Activated naive CD8-positive, alpha-beta T cell treated with anti-CD3 and anti-CD28 coated beads, Interleukin-2, amount 10 ng/mL, durations not matched to agents 7 days and 5 days (primary cell): ENCODE measurements at regions of chrX and their contacts with region 1.

Region 1: DNA sequence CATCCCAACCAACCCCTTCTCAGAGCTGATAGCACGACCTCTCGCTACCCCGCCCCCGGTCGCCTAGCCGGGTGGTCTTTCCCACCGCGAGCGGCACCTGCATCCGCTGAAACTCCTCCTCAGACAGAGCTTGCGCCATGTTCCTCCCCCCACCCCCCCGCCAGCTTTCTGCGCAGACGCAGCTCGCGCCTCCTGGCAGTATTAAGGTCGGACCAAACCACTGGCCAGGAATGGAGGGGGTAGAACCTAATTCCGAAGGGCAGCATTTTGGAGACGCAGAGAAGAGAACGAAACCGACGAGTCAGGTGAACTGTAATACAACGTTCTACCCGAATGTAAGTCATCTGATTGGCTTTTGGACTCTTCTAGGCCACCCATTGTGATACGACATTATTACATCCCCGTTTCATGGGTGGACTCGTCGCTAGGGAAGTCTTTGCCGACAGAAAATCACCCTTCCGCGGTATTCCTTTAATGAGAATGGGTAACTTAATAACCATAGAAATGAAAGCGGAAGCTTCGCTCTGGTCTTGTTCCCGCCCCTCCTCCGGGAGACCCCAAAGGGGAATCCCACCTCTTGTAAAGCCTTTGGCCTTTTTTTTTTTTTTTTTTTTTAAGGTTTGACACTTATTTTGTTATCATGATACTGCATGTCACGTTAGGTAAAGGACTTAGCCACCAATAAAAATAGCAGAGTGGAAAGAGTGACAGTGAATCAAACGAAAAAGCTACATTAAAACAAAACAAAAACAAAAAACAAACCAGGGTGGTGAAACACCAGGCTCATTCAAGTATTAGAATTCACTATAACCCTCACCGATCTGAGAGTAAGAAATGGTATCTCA is at the start of gene GRIPAP1:
- DNase-seq: peak; percentile 73
- ATAC-seq: peak; percentile 79
- H3K4me3 Mint-ChIP-seq: peak within 1 kb of the TSS; percentile 99
- H3K27ac Mint-ChIP-seq: peak within 1 kb of the TSS; percentile 97
- H3K4me1 Mint-ChIP-seq: peaks cover 18% of the 10 kb centered on the region
- H3K27me3 Mint-ChIP-seq: no peaks in the 10 kb centered on the region
- total RNA-seq, gene GRIPAP1: 116 to 123 TPM

Region 2: DNA sequence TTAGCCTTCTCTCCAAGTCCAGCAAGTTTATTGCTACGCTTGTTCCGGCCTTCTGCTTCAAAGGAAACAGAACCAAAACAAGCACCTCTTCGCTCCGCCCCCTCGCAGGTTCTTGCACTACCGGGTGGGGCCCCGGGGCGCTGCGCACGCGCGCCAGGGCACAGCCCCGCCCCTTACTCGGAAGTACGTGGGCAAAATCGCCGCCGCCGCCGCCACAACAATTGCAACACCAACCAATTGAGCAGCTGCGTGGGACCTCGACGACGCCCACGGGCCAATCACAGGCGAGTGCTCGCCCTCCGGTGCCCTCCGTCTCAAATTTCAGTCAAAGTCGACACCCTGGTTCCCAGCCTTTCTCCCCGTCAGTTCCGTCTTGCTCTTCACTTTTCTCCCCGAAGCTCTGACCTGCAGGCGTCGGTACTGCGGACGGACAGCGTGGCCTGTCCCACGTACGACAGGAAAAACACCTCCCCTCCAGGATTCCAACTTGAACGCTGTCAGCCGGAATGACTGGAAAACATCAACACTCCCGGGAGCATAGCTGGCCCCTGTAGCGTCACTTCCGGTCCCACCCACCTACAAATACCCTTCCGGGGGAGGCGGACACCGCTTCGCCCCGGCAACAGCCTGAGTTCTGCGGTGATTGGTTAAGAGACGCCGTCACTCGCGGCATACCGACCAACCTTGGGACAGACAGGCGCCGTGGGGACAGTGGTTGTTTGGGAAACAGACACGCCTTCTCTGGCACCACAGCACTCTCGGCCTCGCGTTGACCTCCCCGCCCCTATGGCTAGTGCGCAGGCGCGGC is 44.3 kb before region 1 on chrX:
- POLR2A ChIA-PET with region 1: interaction called, 10 read pairs
- DNase-seq: peak; percentile 92
- ATAC-seq: peak; percentile 86
- H3K4me3 Mint-ChIP-seq: peak overlapping the region; percentile 98
- H3K27ac Mint-ChIP-seq: peak overlapping the region; percentile 100
- H3K4me1 Mint-ChIP-seq: peaks cover 8% of the 10 kb centered on the region
- H3K27me3 Mint-ChIP-seq: no peaks in the 10 kb centered on the region

Region 3: GRCh38 chrX:49043220-49043986 is 41.1 kb after region 1 on chrX and contains the start of gene TFE3:
- POLR2A ChIA-PET with region 1: interaction called, 15 read pairs
- DNase-seq: peak; percentile 87
- ATAC-seq: peak; percentile 88
- H3K4me3 Mint-ChIP-seq: peak within 1 kb of the TSS; percentile 91
- H3K27ac Mint-ChIP-seq: peak within 1 kb of the TSS; percentile 91
- H3K4me1 Mint-ChIP-seq: peaks cover 26% of the 10 kb centered on the region
- H3K27me3 Mint-ChIP-seq: peaks cover 2% of the 10 kb centered on the region
- total RNA-seq, gene TFE3: 26.1 to 29.0 TPM